ENCODE measurements at regions of chr13 and their contacts with region 1.

Region 1: DNA sequence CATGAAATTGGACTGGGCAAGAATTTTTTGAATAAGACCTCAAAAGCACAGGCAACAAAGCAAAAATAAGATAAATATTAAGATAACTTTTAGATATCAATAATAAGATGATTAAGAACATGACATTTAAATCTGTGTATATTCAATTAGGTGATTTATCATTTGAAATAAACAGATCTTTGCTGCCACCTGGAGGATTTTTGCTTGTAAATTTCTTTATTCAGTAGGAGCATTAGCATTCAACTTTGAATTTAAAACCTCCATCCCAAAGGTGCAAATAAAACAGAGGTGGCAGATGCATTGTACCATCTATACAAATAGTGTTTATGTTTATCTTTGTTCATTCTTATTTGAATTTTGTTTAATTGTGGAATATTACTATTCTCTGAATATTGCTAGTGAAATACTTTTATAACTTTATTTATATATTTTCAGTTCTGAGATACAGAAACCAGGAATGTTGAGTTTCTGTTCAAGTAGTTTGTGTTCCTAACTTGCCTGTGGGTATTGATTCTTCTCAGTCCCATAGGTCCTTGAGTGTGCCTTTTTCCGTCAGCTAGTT is 20.9 kb downstream of the COG6 start:
- DNase-seq: peak in 5 of 9 experiments; percentile 12 to 69 (median 27)
- ATAC-seq: no peak
- H3K4me3 ChIP-seq: no peak overlapping the region
- H3K4me3 Mint-ChIP-seq: no peak overlapping the region
- H3K27ac ChIP-seq: no peak overlapping the region
- H3K27ac Mint-ChIP-seq: no peak overlapping the region
- H3K4me1 ChIP-seq: no peaks in the 10 kb centered on the region
- H3K4me1 Mint-ChIP-seq: no peaks in the 10 kb centered on the region
- H3K27me3 ChIP-seq: no peaks in the 10 kb centered on the region
- H3K27me3 Mint-ChIP-seq: no peaks in the 10 kb centered on the region
- CTCF ChIP-seq: peak; percentile 81

Region 2: GRCh38 chr13:39051157-39051556 is 625.2 kb before region 1 on chr13:
- CTCF ChIA-PET with region 1: no interaction called
- POLR2A ChIA-PET with region 1: no interaction called
- intact Hi-C with region 1: loop called in 1 of 2 experiments (anchors 1 kb)
- DNase-seq: peak in 2 of 9 experiments; percentile 37 to 52
- ATAC-seq: no peak
- H3K4me3 ChIP-seq: no peak overlapping the region
- H3K4me3 Mint-ChIP-seq: no peak overlapping the region
- H3K27ac ChIP-seq: no peak overlapping the region
- H3K27ac Mint-ChIP-seq: no peak overlapping the region
- H3K4me1 ChIP-seq: peaks cover 8% of the 10 kb centered on the region
- H3K4me1 Mint-ChIP-seq: peaks cover 15% of the 10 kb centered on the region
- H3K27me3 ChIP-seq: no peaks in the 10 kb centered on the region
- H3K27me3 Mint-ChIP-seq: no peaks in the 10 kb centered on the region
- CTCF ChIP-seq: no peak

Region 3: DNA sequence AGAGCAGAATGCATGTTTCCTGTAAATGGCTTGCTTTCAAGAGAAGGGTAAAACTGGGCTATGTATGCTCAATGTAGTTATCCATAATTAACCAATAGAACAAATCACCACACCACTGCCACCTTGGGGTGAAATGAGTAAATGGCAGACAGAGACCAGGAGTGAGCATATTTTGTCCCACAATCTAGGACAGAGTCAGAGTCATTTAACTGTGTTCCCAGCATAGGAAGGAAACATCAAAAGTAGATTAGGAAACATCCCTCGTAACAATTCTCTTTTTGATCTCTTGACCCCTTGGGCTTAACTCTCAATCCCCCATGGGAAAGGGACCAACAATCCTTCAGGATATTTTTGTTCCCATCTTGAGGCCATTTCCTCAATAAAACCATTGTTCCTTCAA is 413.4 kb before region 1 on chr13:
- CTCF ChIA-PET with region 1: interaction called, 3 read pairs
- POLR2A ChIA-PET with region 1: no interaction called
- intact Hi-C with region 1: loop called in 1 of 2 experiments (anchors 5 kb)
- DNase-seq: peak in 2 of 9 experiments; percentile 10 to 21
- ATAC-seq: no peak
- H3K4me3 ChIP-seq: no peak overlapping the region
- H3K4me3 Mint-ChIP-seq: no peak overlapping the region
- H3K27ac ChIP-seq: no peak overlapping the region
- H3K27ac Mint-ChIP-seq: no peak overlapping the region
- H3K4me1 ChIP-seq: no peaks in the 10 kb centered on the region
- H3K4me1 Mint-ChIP-seq: no peaks in the 10 kb centered on the region
- H3K27me3 ChIP-seq: no peaks in the 10 kb centered on the region
- H3K27me3 Mint-ChIP-seq: peaks cover 7% of the 10 kb centered on the region
- CTCF ChIP-seq: peak; percentile 41

Region 4: GRCh38 chr13:39415008-39415802 is 261.2 kb before region 1 on chr13:
- CTCF ChIA-PET with region 1: no interaction called
- POLR2A ChIA-PET with region 1: no interaction called
- intact Hi-C with region 1: loop called in 1 of 2 experiments (anchors 2 kb)
- DNase-seq: peak in 1 of 9 experiments; percentile 3
- ATAC-seq: no peak
- H3K4me3 ChIP-seq: no peak overlapping the region
- H3K4me3 Mint-ChIP-seq: no peak overlapping the region
- H3K27ac ChIP-seq: no peak overlapping the region
- H3K27ac Mint-ChIP-seq: no peak overlapping the region
- H3K4me1 ChIP-seq: no peaks in the 10 kb centered on the region
- H3K4me1 Mint-ChIP-seq: no peaks in the 10 kb centered on the region
- H3K27me3 ChIP-seq: no peaks in the 10 kb centered on the region
- H3K27me3 Mint-ChIP-seq: peaks cover 18% of the 10 kb centered on the region
- CTCF ChIP-seq: no peak

Measured in CD8-positive, alpha-beta T cell (primary cell).